Activated CD4-positive, alpha-beta memory T cell treated with anti-CD3 and anti-CD28 coated beads for 36 hours (primary cell): ENCODE measurements at regions of chr5 and their contacts with region 1.

Region 1: GRCh38 chr5:95927927-95928723 is 33.5 kb downstream of the ELL2 start:
- DNase-seq: no peak
- H3K4me3 Mint-ChIP-seq: no peak overlapping the region
- H3K27ac Mint-ChIP-seq: peak overlapping the region; percentile 84
- H3K4me1 Mint-ChIP-seq: peaks cover 46% of the 10 kb centered on the region
- H3K27me3 Mint-ChIP-seq: no peaks in the 10 kb centered on the region

Region 2: GRCh38 chr5:95583992-95584391 is 344.1 kb before region 1 on chr5:
- CTCF ChIA-PET with region 1: no interaction called
- POLR2A ChIA-PET with region 1: no interaction called
- intact Hi-C with region 1: no loop called
- DNase-seq: no peak
- H3K4me3 Mint-ChIP-seq: no peak overlapping the region
- H3K27ac Mint-ChIP-seq: no peak overlapping the region
- H3K4me1 Mint-ChIP-seq: no peaks in the 10 kb centered on the region
- H3K27me3 Mint-ChIP-seq: no peaks in the 10 kb centered on the region

Region 3: GRCh38 chr5:95858661-95859326 is 69.3 kb before region 1 on chr5:
- CTCF ChIA-PET with region 1: interaction called, 4 read pairs
- POLR2A ChIA-PET with region 1: no interaction called
- intact Hi-C with region 1: loop called (anchors 2 kb)
- DNase-seq: peak; percentile 97
- H3K4me3 Mint-ChIP-seq: peak overlapping the region; percentile 40
- H3K27ac Mint-ChIP-seq: peak overlapping the region; percentile 68
- H3K4me1 Mint-ChIP-seq: peaks cover 55% of the 10 kb centered on the region
- H3K27me3 Mint-ChIP-seq: no peaks in the 10 kb centered on the region

Region 4: GRCh38 chr5:95973793-95974325 is 45.7 kb after region 1 on chr5:
- CTCF ChIA-PET with region 1: no interaction called
- POLR2A ChIA-PET with region 1: no interaction called
- intact Hi-C with region 1: no loop called
- DNase-seq: peak; percentile 45
- H3K4me3 Mint-ChIP-seq: no peak overlapping the region
- H3K27ac Mint-ChIP-seq: peak overlapping the region; percentile 26
- H3K4me1 Mint-ChIP-seq: peaks cover 3% of the 10 kb centered on the region
- H3K27me3 Mint-ChIP-seq: peaks cover 1% of the 10 kb centered on the region